ENCODE measurements at regions of chr15 and their contacts with region 1.

Region 1: GRCh38 chr15:22980189-22981050 is at the start of gene CYFIP1:
- DNase-seq: peak; percentile 62 to 64
- ATAC-seq: peak; percentile 83 to 88
- H3K4me3 ChIP-seq: peak within 1 kb of the TSS; percentile 72 to 97 (median 88)
- H3K27ac ChIP-seq: peak within 1 kb of the TSS; percentile 50 to 78 (median 72)
- H3K4me1 ChIP-seq: peaks cover 5 to 13% of the 10 kb centered on the region in 2 donors
- H3K27me3 ChIP-seq: no peaks in the 10 kb centered on the region
- CTCF ChIP-seq: no peak
- POLR2A ChIP-seq: peak; percentile 24 to 54
- total RNA-seq, gene CYFIP1: 31.1 to 52.6 (median 37.4) TPM

Region 2: GRCh38 chr15:22786868-22787698 is 193.3 kb before region 1 on chr15:
- in situ Hi-C with region 1: no loop called
- intact Hi-C with region 1: loop called (anchors 5 kb)
- DNase-seq: no peak
- ATAC-seq: peak; percentile 46 to 50
- H3K4me3 ChIP-seq: peak overlapping the region; percentile 54 to 95 (median 78)
- H3K27ac ChIP-seq: peak overlapping the region; percentile 79 to 93 (median 88)
- H3K4me1 ChIP-seq: peaks cover 0 to 7% of the 10 kb centered on the region in 2 donors
- H3K27me3 ChIP-seq: no peaks in the 10 kb centered on the region
- CTCF ChIP-seq: no peak
- POLR2A ChIP-seq: no peak

Region 3: GRCh38 chr15:22838292-22839042 is 142.0 kb before region 1 on chr15 and contains the start of gene NIPA2:
- in situ Hi-C with region 1: no loop called
- intact Hi-C with region 1: loop called (anchors 10 kb)
- DNase-seq: peak; percentile 94 to 98
- ATAC-seq: peak; percentile 95 to 97
- H3K4me3 ChIP-seq: peak within 1 kb of the TSS; percentile 70 to 77 (median 75)
- H3K27ac ChIP-seq: peak within 1 kb of the TSS; percentile 87 to 96 (median 91)
- H3K4me1 ChIP-seq: peaks cover 17 to 20% of the 10 kb centered on the region in 2 donors
- H3K27me3 ChIP-seq: no peaks in the 10 kb centered on the region
- CTCF ChIP-seq: peak in 1 of 5 experiments; percentile 22
- POLR2A ChIP-seq: peak; percentile 89 to 91
- total RNA-seq, gene NIPA2: 27.3 to 43.5 (median 38.6) TPM

Region 4: GRCh38 chr15:23039151-23039916 is 58.9 kb after region 1 on chr15 and contains the start of gene TUBGCP5:
- in situ Hi-C with region 1: no loop called
- intact Hi-C with region 1: loop called (anchors 2 kb)
- DNase-seq: peak; percentile 90 to 94
- ATAC-seq: peak; percentile 96
- H3K4me3 ChIP-seq: peak within 1 kb of the TSS; percentile 57 to 85 (median 78)
- H3K27ac ChIP-seq: peak within 1 kb of the TSS; percentile 76 to 84 (median 78)
- H3K4me1 ChIP-seq: peaks cover 8 to 10% of the 10 kb centered on the region in 2 donors
- H3K27me3 ChIP-seq: no peaks in the 10 kb centered on the region
- CTCF ChIP-seq: peak; percentile 50 to 67 (median 59)
- POLR2A ChIP-seq: peak; percentile 83 to 87
- total RNA-seq, gene TUBGCP5: 11.6 to 18.2 (median 13.6) TPM